H1 (cell line): ENCODE measurements at regions of chr20 and their contacts with region 1.

Region 1: GRCh38 chr20:1108437-1108920 is 9.9 kb upstream of the PSMF1 start:
- DNase-seq: peak in 1 of 2 experiments; percentile 82
- H3K4me3 ChIP-seq: no peak overlapping the region
- H3K27ac ChIP-seq: no peak overlapping the region
- H3K4me1 ChIP-seq: no peaks in the 10 kb centered on the region
- H3K27me3 ChIP-seq: 0 out of 7 replicates have a peak, but pooled peaks cover 0 to 2% (median 0%) of the 10 kb centered on the region in 4 experiments
- CTCF ChIP-seq: peak; percentile 72 to 87 (median 81)
- EP300 ChIP-seq: no peak
- POLR2A ChIP-seq: no peak
- RAD21 ChIP-seq: peak; percentile 84

Region 2: GRCh38 chr20:846894-847278 is 261.6 kb before region 1 on chr20:
- CTCF ChIA-PET with region 1: no interaction called
- POLR2A ChIA-PET with region 1: no interaction called
- DNase-seq: no peak
- H3K4me3 ChIP-seq: no peak overlapping the region
- H3K27ac ChIP-seq: no peak overlapping the region
- H3K4me1 ChIP-seq: peaks cover 3 to 26% (median 13%) of the 10 kb centered on the region in 4 experiments
- H3K27me3 ChIP-seq: peaks cover 2 to 33% (median 29%) of the 10 kb centered on the region in 4 experiments
- CTCF ChIP-seq: no peak
- EP300 ChIP-seq: no peak
- POLR2A ChIP-seq: no peak
- RAD21 ChIP-seq: no peak

Region 3: DNA sequence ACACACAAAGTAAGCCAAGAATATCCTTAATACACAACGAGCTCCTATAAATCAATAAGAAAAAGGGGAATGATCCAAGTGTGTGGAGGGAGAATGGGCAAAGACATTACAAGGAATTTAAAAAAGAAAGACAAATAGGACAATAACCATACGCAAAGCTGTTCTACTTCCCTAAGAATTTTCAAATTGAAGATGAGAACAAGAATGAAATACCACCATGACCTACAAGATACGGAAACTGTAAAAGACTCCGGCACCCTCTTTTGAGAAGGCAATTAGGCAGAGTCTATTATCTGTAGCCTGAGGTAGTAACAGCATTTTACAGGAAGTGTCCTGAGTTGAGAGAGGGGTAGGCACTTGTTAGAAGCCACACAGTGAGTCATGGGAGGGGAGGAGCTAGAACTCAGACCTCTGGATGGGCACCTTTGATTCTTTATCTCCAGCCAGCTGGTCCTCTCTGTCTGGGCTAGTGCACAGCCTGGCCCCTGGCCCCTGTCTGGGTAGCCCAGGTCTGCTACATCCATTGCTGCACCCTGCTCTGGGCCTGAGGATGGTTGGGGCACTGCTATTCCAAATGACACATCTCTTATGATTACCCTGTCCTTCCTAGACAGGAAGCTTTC is 121.6 kb before region 1 on chr20:
- CTCF ChIA-PET with region 1: interaction called, 11 read pairs
- POLR2A ChIA-PET with region 1: no interaction called
- DNase-seq: no peak
- H3K4me3 ChIP-seq: no peak overlapping the region
- H3K27ac ChIP-seq: no peak overlapping the region
- H3K4me1 ChIP-seq: peaks cover 0 to 9% (median 3%) of the 10 kb centered on the region in 4 experiments; a peak in 4 of 7 replicates
- H3K27me3 ChIP-seq: no peaks in the 10 kb centered on the region; a peak in 1 of 7 replicates
- CTCF ChIP-seq: no peak
- EP300 ChIP-seq: no peak
- POLR2A ChIP-seq: no peak
- RAD21 ChIP-seq: no peak

Region 4: GRCh38 chr20:1075616-1076015 is 32.9 kb before region 1 on chr20:
- CTCF ChIA-PET with region 1: interaction called, 12 read pairs
- POLR2A ChIA-PET with region 1: no interaction called
- DNase-seq: no peak
- H3K4me3 ChIP-seq: no peak overlapping the region
- H3K27ac ChIP-seq: no peak overlapping the region
- H3K4me1 ChIP-seq: no peaks in the 10 kb centered on the region; a peak in 2 of 7 replicates
- H3K27me3 ChIP-seq: no peaks in the 10 kb centered on the region
- CTCF ChIP-seq: no peak
- EP300 ChIP-seq: no peak
- POLR2A ChIP-seq: no peak
- RAD21 ChIP-seq: no peak

Region 5: DNA sequence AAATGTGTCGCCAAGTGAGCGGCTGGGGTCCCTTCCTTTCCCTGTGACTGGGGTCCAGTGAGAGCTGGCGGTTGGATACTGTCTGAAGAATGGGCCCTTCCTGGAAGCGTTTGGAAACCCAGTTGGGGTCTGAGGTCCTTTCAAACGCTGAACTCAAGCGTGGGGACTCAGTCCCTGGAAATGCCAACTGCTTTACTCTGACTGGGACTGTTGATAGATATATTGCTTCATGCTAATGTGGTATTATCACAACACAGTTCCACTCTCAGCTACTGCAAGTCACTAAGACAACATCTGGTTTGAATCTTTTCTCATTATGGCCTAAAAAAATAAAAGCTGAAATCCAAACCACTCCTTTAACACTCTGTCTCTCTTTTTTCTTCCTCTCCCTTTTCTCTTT is 13.7 kb before region 1 on chr20:
- CTCF ChIA-PET with region 1: interaction called, 30 read pairs
- POLR2A ChIA-PET with region 1: interaction called, 4 read pairs
- DNase-seq: no peak
- H3K4me3 ChIP-seq: no peak overlapping the region
- H3K27ac ChIP-seq: no peak overlapping the region
- H3K4me1 ChIP-seq: no peaks in the 10 kb centered on the region
- H3K27me3 ChIP-seq: no peaks in the 10 kb centered on the region
- CTCF ChIP-seq: no peak
- EP300 ChIP-seq: no peak
- POLR2A ChIP-seq: no peak
- RAD21 ChIP-seq: no peak

Region 6: DNA sequence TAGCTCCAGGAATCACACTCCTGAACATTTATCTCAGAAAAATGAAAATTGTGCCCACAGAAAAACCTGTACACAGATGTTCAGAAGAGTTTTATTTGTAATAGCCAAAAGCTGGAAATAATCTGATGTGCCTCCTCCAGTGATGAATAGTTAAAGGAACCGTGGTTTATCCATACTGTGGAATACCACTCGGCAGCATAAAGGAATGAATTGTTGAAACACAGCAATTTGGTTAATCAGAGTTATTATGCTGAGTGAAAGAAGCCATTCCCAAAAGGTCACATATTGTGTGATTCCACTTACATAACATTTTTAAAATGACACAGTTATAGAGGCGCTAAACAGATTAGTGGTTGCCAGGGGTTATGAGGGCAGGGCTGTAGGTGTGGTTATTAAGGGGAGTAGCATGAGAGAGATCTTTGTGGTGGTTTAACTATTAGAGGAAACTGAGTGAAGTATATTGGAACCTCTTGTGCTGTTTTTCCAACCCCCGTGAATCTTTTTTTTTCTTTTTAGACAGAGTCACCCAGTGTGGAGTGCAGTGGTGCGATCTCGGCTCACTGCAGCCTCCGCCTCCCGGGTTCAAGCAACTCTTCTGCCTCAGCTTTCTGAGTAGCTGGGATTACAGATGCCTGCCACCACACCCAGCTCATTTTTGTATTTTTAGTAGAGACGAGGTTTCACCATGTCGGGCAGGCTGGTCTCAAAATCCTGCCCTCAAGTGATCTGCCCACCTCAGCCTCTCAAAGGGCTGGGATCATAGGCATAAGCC is 36.1 kb after region 1 on chr20:
- CTCF ChIA-PET with region 1: no interaction called
- POLR2A ChIA-PET with region 1: no interaction called
- DNase-seq: no peak
- H3K4me3 ChIP-seq: no peak overlapping the region
- H3K27ac ChIP-seq: no peak overlapping the region
- H3K4me1 ChIP-seq: no peaks in the 10 kb centered on the region
- H3K27me3 ChIP-seq: no peaks in the 10 kb centered on the region
- CTCF ChIP-seq: no peak
- EP300 ChIP-seq: no peak
- POLR2A ChIP-seq: no peak
- RAD21 ChIP-seq: no peak

Region 7: DNA sequence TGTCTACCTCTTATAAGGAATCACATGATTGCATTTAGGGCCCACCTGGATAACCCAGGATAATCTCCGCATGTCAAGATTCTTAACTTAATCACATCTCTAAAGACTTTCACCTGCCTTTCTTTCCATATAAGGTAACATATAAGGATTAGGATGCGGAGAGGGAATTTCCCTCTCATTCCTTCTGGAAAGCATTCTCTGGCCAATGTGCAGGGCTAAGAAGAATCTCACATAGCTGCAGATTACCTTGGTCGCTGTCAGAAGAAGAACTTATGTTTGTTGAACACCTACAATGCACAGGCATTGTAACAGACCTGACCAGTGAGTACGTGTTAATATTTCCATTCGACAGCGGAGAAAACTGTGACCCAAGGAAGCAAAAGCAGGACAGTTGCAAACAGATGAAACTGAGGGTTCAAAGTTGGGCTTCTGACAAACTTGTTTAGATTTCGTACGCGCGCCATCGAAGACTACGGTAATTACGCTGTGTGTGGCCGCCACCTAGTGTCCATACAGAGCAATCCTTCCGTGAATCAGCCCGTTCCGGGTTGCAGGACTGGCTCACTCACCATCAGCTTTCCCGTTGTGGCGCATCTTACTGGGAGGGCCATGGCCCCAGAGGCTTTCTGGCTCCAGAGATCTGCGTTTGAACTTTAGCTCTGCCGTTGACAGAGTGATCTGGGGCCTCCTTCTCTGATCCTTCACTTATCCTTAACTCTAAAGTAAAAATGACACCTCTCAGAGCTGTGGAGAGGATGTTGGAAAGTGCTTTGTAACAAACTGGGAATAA is 104.3 kb after region 1 on chr20:
- CTCF ChIA-PET with region 1: interaction called, 26 read pairs
- POLR2A ChIA-PET with region 1: no interaction called
- DNase-seq: peak; percentile 53 to 77
- H3K4me3 ChIP-seq: no peak overlapping the region
- H3K27ac ChIP-seq: no peak overlapping the region
- H3K4me1 ChIP-seq: peaks cover 0 to 10% (median 0%) of the 10 kb centered on the region in 4 experiments; a peak in 3 of 7 replicates
- H3K27me3 ChIP-seq: 0 out of 7 replicates have a peak, but pooled peaks cover 0 to 3% (median 0%) of the 10 kb centered on the region in 4 experiments
- CTCF ChIP-seq: peak; percentile 80 to 93 (median 85)
- EP300 ChIP-seq: no peak
- POLR2A ChIP-seq: no peak
- RAD21 ChIP-seq: peak; percentile 92